Naive thymus-derived CD4-positive, alpha-beta T cell (primary cell): ENCODE measurements at regions of chr16 and their contacts with region 1.

Region 1: DNA sequence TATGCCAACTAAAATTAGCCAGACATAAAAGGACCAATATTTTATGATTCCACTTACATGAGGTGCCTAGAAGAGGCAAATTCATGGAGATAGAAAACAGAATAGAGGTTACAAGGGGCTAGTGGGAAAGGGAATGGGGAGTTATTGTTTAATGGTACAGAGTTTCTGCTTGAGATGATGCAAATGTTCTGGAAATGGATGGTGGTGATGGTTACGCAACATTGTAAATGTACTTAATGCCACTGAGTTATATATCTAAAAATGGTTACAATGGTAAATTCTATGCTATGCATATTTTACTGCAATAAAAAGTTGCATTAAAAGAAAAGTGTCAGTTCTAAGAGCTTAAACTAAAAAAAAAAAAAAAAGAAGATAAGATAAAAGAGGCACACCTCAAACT is 17.9 kb downstream of the MT1X start:
- DNase-seq: no peak
- ATAC-seq: no peak
- H3K4me3 ChIP-seq: no peak overlapping the region
- H3K4me3 Mint-ChIP-seq: no peak overlapping the region
- H3K27ac ChIP-seq: no peak overlapping the region
- H3K27ac Mint-ChIP-seq: peak overlapping the region in 2 of 9 donors; percentile 45 to 76
- H3K4me1 ChIP-seq: peaks cover 0 to 5% of the 10 kb centered on the region in 2 donors
- H3K4me1 Mint-ChIP-seq: peaks cover 0 to 10% (median 9%) of the 10 kb centered on the region in 7 donors
- H3K27me3 ChIP-seq: no peaks in the 10 kb centered on the region
- H3K27me3 Mint-ChIP-seq: peaks cover 0 to 3% (median 0%) of the 10 kb centered on the region in 5 donors

Region 2: GRCh38 chr16:55301385-55302008 is 1398.7 kb before region 1 on chr16:
- CTCF ChIA-PET with region 1: no interaction called
- POLR2A ChIA-PET with region 1: no interaction called
- intact Hi-C with region 1: no loop called
- DNase-seq: no peak
- ATAC-seq: no peak
- H3K4me3 ChIP-seq: no peak overlapping the region
- H3K4me3 Mint-ChIP-seq: no peak overlapping the region
- H3K27ac ChIP-seq: no peak overlapping the region
- H3K27ac Mint-ChIP-seq: no peak overlapping the region
- H3K4me1 ChIP-seq: no peaks in the 10 kb centered on the region
- H3K4me1 Mint-ChIP-seq: no peaks in the 10 kb centered on the region
- H3K27me3 ChIP-seq: no peaks in the 10 kb centered on the region
- H3K27me3 Mint-ChIP-seq: peaks cover 10 to 47% (median 36%) of the 10 kb centered on the region in 5 donors

Region 3: DNA sequence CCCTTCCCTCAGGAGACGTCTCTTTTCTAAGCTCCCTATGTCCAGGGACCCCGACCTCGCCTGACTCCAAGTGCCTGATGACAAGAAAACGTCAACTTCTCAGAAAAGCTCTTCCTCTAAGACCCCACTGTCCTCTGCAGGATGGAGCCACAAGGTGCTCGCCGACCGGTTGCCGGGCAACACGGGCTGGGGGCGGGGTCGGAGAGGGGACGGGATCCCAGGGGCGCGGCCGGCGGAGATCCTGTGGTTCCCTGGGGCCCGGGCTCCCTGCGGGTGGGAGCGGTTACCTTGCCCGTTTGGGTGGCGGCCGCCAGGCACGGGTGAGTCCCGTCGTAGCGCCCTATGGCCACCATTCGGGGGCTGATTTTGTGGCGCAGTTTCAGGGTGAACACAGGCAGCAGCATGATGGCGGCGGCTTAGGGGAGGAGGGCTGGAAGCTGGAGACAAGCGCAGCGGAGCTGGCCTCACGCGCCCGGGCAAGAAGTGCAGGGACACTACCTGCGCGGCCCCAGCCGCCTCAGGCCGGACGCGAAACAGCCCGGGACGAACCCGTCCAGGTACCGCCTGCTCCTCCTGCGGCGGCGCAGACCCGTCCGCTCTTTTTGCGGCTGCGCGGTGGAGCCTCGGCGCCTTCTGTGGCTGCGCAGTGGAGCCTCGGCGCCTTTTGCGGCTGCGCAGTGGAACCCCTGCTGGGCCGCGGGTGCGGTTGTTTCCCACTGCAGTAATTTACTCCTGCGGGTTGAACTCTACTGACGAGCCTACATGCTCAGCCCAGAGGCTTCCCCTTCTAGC is 180.5 kb before region 1 on chr16 and contains the start of gene BBS2:
- CTCF ChIA-PET with region 1: interaction called, 26 read pairs
- POLR2A ChIA-PET with region 1: interaction called, 3 read pairs
- intact Hi-C with region 1: loop called (anchors 1 kb)
- DNase-seq: peak; percentile 84 to 93 (median 92)
- ATAC-seq: peak; percentile 89
- H3K4me3 ChIP-seq: peak within 1 kb of the TSS; percentile 99
- H3K4me3 Mint-ChIP-seq: peak within 1 kb of the TSS; percentile 82 to 91 (median 86)
- H3K27ac ChIP-seq: peak within 1 kb of the TSS; percentile 92
- H3K27ac Mint-ChIP-seq: peak within 1 kb of the TSS; percentile 60 to 95 (median 90)
- H3K4me1 ChIP-seq: peaks cover 8 to 26% of the 10 kb centered on the region in 2 donors
- H3K4me1 Mint-ChIP-seq: peaks cover 11 to 62% (median 52%) of the 10 kb centered on the region in 7 donors
- H3K27me3 ChIP-seq: no peaks in the 10 kb centered on the region
- H3K27me3 Mint-ChIP-seq: no peaks in the 10 kb centered on the region
- total RNA-seq, gene BBS2: 14.7 to 130 (median 84.0) TPM

Region 4: DNA sequence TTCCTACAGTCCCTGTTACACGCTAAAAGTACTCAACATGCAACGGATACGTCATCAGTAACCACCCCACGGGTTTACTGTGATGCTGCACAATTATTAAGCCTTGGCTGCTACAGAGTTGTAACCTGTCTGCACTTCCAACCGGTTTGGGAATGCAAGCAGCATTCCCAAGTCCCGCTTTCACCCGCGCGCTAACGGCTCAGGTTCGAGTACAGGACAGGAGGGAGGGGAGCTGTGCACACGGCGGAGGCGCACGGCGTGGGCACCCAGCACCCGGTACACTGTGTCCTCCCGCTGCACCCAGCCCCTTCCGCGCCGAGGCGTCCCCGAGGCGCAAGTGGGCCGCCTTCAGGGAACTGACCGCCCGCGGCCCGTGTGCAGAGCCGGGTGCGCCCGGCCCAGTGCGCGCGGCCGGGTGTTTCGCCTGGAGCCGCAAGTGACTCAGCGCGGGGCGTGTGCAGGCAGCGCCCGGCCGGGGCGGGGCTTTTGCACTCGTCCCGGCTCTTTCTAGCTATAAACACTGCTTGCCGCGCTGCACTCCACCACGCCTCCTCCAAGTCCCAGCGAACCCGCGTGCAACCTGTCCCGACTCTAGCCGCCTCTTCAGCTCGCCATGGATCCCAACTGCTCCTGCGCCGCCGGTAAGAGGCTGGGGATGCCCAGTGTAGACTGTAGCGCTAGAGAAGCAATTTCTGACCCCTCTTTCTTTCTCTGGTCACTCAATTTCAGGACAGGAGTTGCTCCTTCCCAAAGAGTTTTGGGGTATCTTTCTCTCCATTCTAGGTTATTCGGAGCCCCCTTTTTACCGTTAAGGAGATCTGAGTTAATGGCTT is 91.9 kb before region 1 on chr16 and contains the start of gene MT2A:
- CTCF ChIA-PET with region 1: interaction called, 14 read pairs
- POLR2A ChIA-PET with region 1: interaction called, 16 read pairs
- intact Hi-C with region 1: loop called (anchors 1 kb)
- DNase-seq: peak; percentile 70 to 89 (median 84)
- ATAC-seq: peak; percentile 88
- H3K4me3 ChIP-seq: peak within 1 kb of the TSS; percentile 97
- H3K4me3 Mint-ChIP-seq: peak within 1 kb of the TSS; percentile 85 to 100 (median 96)
- H3K27ac ChIP-seq: peak within 1 kb of the TSS; percentile 94
- H3K27ac Mint-ChIP-seq: peak within 1 kb of the TSS; percentile 85 to 99 (median 93)
- H3K4me1 ChIP-seq: peaks cover 29 to 34% of the 10 kb centered on the region in 2 donors
- H3K4me1 Mint-ChIP-seq: peaks cover 35 to 52% (median 47%) of the 10 kb centered on the region in 7 donors
- H3K27me3 ChIP-seq: no peaks in the 10 kb centered on the region
- H3K27me3 Mint-ChIP-seq: no peaks in the 10 kb centered on the region
- total RNA-seq, gene MT2A: 15.0 to 435 (median 32.8) TPM

Region 5: GRCh38 chr16:56667581-56668571 is 32.3 kb before region 1 on chr16 and contains the start of gene MT1G:
- CTCF ChIA-PET with region 1: interaction called, 33 read pairs
- POLR2A ChIA-PET with region 1: interaction called, 5 read pairs
- intact Hi-C with region 1: no loop called
- DNase-seq: peak in 1 of 9 donors; percentile 58
- ATAC-seq: peak; percentile 57
- H3K4me3 ChIP-seq: no peak within 1 kb of the TSS
- H3K4me3 Mint-ChIP-seq: peak within 1 kb of the TSS in 9 of 10 donors; percentile 25 to 78 (median 50)
- H3K27ac ChIP-seq: no peak within 1 kb of the TSS
- H3K27ac Mint-ChIP-seq: peak within 1 kb of the TSS in 2 of 9 donors; percentile 16 to 43
- H3K4me1 ChIP-seq: no peaks in the 10 kb centered on the region
- H3K4me1 Mint-ChIP-seq: peaks cover 0 to 38% (median 24%) of the 10 kb centered on the region in 7 donors
- H3K27me3 ChIP-seq: peaks cover 0 to 25% of the 10 kb centered on the region in 2 donors
- H3K27me3 Mint-ChIP-seq: peaks cover 44 to 85% (median 49%) of the 10 kb centered on the region in 5 donors
- total RNA-seq, gene MT1G: 1.2 to 36.1 TPM in 2 of 5 experiments, not detected in the others

Region 6: GRCh38 chr16:56729735-56730662 is 29.8 kb after region 1 on chr16 and contains the start of gene NUP93:
- CTCF ChIA-PET with region 1: interaction called, 4 read pairs
- POLR2A ChIA-PET with region 1: interaction called, 5 read pairs
- intact Hi-C with region 1: loop called (anchors 1 kb)
- DNase-seq: peak; percentile 76 to 90 (median 88)
- ATAC-seq: peak; percentile 99
- H3K4me3 ChIP-seq: peak within 1 kb of the TSS; percentile 82
- H3K4me3 Mint-ChIP-seq: peak within 1 kb of the TSS in 1 of 10 donors; percentile 90
- H3K27ac ChIP-seq: peak within 1 kb of the TSS; percentile 84
- H3K27ac Mint-ChIP-seq: peak within 1 kb of the TSS in 7 of 9 donors; percentile 82 to 98 (median 94)
- H3K4me1 ChIP-seq: peaks cover 22 to 23% of the 10 kb centered on the region in 2 donors
- H3K4me1 Mint-ChIP-seq: peaks cover 10 to 31% (median 26%) of the 10 kb centered on the region in 7 donors
- H3K27me3 ChIP-seq: no peaks in the 10 kb centered on the region
- H3K27me3 Mint-ChIP-seq: no peaks in the 10 kb centered on the region
- total RNA-seq, gene NUP93: 53.0 to 90.5 (median 58.3) TPM